ENCODE measurements at regions of chr1 and their contacts with region 1.

Region 1: DNA sequence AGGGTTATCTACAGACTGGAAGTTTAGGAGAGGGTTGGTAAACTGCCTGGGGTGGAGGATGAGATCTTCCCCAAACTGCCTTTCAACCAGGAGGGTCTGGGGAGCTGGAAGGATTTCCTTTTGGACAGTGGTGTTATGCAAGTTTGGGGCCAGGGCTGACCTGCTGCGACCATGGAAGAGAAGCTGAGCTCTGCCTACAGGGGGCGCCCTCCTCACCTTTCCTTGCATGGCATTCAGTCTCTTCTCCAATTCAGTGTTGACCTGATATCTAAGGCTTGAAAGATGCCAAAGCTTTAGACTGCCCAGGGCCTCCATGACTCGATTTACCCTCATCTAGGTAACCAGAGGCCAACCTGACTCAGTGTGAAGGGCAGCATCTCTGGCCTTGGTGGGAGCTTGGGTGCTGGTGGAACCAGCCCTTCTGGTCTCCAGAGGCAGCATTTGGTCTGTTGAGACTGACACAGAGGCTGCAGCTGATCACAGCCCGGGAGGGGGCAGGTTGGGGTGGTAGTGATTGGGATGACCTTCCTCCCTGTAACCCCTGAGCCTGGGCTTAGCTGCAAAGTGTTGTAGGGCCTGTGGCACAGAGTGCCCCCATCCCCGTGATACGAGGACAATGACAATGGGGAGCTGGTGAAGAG is 170.0 kb downstream of the GRIK3 start:
- DNase-seq: peak; percentile 46
- H3K4me3 ChIP-seq: no peak overlapping the region
- H3K27ac ChIP-seq: peak overlapping the region in 1 of 2 experiments; percentile 83; a peak in 2 of 4 replicates
- H3K4me1 ChIP-seq: peaks cover 0 to 29% of the 10 kb centered on the region in 2 experiments; a peak in 2 of 4 replicates
- H3K27me3 ChIP-seq: no peaks in the 10 kb centered on the region
- CTCF ChIP-seq: peak; percentile 23
- EP300 ChIP-seq: no peak
- RAD21 ChIP-seq: peak; percentile 24

Region 2: GRCh38 chr1:36705629-36706028 is 158.7 kb before region 1 on chr1:
- CTCF ChIA-PET with region 1: interaction called, 13 read pairs
- POLR2A ChIA-PET with region 1: interaction called, 3 read pairs
- DNase-seq: peak; percentile 40
- H3K4me3 ChIP-seq: no peak overlapping the region
- H3K27ac ChIP-seq: no peak overlapping the region
- H3K4me1 ChIP-seq: peaks cover 0 to 4% of the 10 kb centered on the region in 2 experiments; a peak in 2 of 4 replicates
- H3K27me3 ChIP-seq: no peaks in the 10 kb centered on the region
- CTCF ChIP-seq: no peak
- EP300 ChIP-seq: no peak
- RAD21 ChIP-seq: no peak; the same call in 1 of the 2 replicates

Region 3: DNA sequence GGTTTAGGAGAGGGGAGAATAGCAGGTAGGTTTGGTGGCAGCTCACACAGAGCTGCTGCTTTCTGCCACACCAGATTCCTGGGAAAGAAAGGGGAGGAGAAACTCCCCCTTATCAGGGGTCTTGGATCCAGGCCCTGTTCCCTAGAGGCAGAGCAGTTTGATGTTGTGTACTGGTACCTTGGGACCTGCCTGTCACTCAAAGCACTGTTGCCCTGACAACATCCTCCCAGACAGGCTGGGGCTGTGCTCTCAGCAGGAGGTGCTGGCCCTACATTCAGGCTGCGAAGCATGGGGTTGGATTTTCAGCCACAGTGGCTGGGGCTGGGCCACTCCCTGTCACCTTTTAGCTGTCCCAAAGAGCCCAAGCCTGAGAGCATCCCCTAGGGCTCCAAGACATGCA is 17.9 kb before region 1 on chr1:
- CTCF ChIA-PET with region 1: interaction called, 42 read pairs
- POLR2A ChIA-PET with region 1: no interaction called
- DNase-seq: peak; percentile 64
- H3K4me3 ChIP-seq: no peak overlapping the region
- H3K27ac ChIP-seq: no peak overlapping the region
- H3K4me1 ChIP-seq: peaks cover 0 to 8% of the 10 kb centered on the region in 2 experiments; a peak in 1 of 4 replicates
- H3K27me3 ChIP-seq: no peaks in the 10 kb centered on the region
- CTCF ChIP-seq: no peak
- EP300 ChIP-seq: no peak
- RAD21 ChIP-seq: no peak

Region 4: DNA sequence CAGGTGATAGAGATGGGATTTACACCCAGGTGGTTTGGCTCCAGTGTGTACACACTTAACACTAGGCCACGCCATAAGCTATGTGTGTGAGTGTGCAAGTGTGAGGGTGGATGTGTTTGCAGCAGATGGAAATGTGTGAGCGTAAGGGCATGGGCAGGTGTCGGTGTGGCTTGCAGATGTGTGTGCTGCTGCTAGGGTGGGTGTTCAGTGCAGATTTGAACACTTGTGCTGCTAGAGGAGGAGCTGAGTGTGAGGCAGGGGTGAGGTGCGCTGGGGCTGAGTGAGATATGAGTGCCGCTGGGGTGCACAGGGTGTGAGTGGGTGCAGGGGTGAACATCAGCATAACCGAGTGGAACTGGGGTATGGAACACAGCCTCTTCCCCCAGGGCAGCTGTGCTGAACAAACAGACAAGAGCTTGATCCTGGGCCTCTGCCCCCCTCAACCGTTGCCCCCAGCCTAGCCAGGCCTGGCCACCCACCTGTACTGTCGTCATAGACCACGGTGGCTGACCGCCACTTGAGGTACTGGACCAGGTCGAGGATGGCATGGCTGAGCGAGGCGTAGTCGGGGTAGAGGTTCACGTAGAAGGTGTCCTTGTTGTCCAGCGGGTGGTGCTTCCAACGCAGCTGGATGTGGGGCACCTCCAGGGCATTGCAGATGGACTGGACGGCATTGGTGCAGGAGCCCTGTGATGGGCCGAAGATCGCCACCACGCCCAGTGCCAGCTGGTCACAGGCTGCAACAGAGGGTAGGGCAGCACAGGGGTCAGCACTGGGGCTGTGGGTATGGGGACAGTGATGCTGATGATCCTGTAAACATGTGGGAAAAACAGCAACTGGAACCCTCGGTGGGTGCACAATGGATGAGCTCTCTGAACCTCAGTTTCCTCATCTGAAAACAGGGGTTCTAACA is 16.1 kb after region 1 on chr1:
- CTCF ChIA-PET with region 1: interaction called, 20 read pairs
- POLR2A ChIA-PET with region 1: no interaction called
- DNase-seq: peak; percentile 5
- H3K4me3 ChIP-seq: no peak overlapping the region
- H3K27ac ChIP-seq: no peak overlapping the region
- H3K4me1 ChIP-seq: peaks cover 0 to 21% of the 10 kb centered on the region in 2 experiments; a peak in 1 of 4 replicates
- H3K27me3 ChIP-seq: no peaks in the 10 kb centered on the region
- CTCF ChIP-seq: no peak
- EP300 ChIP-seq: no peak
- RAD21 ChIP-seq: no peak

Region 5: DNA sequence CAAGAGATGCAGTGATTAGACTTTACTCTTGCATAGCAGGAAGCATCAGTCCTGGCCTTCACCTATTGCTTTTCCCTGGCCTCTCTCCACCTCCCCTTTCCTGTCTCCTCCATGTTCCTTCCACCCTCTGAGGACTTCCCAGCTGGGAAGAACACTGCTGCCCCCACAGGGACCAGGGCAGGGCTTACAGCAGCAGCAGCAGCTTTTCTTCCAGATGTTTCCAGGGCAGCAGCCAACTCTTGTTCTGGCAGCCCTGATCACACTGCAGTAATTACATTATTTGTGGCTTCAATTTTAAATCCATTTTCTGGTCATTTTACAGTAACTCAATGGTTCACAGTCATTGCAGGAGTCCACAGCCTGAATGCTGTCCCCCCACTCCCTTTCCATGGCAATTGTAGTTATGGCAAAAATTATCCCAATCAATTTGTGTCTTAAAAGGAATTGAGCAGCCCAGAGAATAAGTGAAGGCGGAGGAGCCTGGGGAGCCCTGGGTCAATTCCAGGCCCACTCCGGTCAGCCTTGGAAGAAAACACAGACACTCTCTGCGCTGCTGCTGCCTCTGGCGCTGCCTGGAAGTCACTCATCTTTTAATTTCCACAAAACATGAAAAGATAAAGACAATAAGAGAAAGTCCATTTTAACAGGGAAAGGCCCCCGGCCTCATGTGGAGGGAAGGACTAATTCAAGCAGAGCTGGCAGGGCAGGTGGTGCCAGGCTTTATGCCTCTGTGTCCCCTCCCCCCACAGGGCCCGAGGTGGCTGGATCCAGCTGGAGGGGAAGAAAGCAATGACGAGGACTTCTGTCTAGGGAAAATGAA is 21.4 kb after region 1 on chr1:
- CTCF ChIA-PET with region 1: interaction called, 16 read pairs
- POLR2A ChIA-PET with region 1: no interaction called
- DNase-seq: peak; percentile 81
- H3K4me3 ChIP-seq: no peak overlapping the region
- H3K27ac ChIP-seq: peak overlapping the region in 1 of 2 experiments; percentile 67; a peak in 2 of 4 replicates
- H3K4me1 ChIP-seq: peaks cover 0 to 15% of the 10 kb centered on the region in 2 experiments; a peak in 2 of 4 replicates
- H3K27me3 ChIP-seq: no peaks in the 10 kb centered on the region
- CTCF ChIP-seq: no peak
- EP300 ChIP-seq: peak in 1 of 2 experiments; percentile 36; a peak in 1 of 4 replicates
- RAD21 ChIP-seq: peak; percentile 89

Region 6: GRCh38 chr1:36924282-36924811 is 60.0 kb after region 1 on chr1:
- CTCF ChIA-PET with region 1: no interaction called
- POLR2A ChIA-PET with region 1: no interaction called
- DNase-seq: peak; percentile 38
- H3K4me3 ChIP-seq: no peak overlapping the region
- H3K27ac ChIP-seq: no peak overlapping the region
- H3K4me1 ChIP-seq: peaks cover 0 to 7% of the 10 kb centered on the region in 2 experiments; a peak in 1 of 4 replicates
- H3K27me3 ChIP-seq: no peaks in the 10 kb centered on the region
- CTCF ChIP-seq: no peak
- EP300 ChIP-seq: no peak
- RAD21 ChIP-seq: no peak

Region 7: GRCh38 chr1:37021502-37021901 is 157.2 kb after region 1 on chr1:
- CTCF ChIA-PET with region 1: no interaction called
- POLR2A ChIA-PET with region 1: no interaction called
- DNase-seq: no peak
- H3K4me3 ChIP-seq: no peak overlapping the region
- H3K27ac ChIP-seq: no peak overlapping the region
- H3K4me1 ChIP-seq: no peaks in the 10 kb centered on the region
- H3K27me3 ChIP-seq: no peaks in the 10 kb centered on the region
- CTCF ChIP-seq: no peak
- EP300 ChIP-seq: no peak
- RAD21 ChIP-seq: no peak